ENCODE measurements at regions of chr2 and their contacts with region 1.

Region 1: DNA sequence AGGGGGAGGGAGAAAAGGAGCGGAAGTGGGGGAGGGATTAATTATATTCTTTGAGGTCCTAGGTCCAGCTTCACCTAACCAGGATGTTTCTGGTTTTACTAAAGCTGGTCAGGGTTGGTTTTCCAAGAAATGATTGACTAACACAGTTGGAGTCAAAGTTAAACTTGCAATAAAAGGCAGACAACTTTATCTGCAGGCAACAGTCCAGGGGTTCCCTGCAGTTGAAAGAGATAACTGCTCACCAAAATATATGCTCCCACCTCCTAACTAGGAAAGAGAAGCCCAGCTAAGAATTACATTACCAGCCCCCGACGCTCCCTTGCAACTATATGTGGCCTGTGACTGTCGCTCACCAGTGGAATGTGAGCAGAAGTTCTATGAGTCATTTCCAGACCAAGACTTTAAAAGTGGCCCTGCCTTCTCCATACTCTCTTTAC is 140.0 kb upstream of the PKDCC start:
- DNase-seq: no peak
- H3K4me3 ChIP-seq: no peak overlapping the region
- H3K27ac ChIP-seq: no peak overlapping the region
- H3K27me3 ChIP-seq: peaks cover 2% of the 10 kb centered on the region
- CTCF ChIP-seq: no peak

Region 2: GRCh38 chr2:41926614-41927580 is 19.1 kb after region 1 on chr2:
- CTCF ChIA-PET with region 1: no interaction called
- POLR2A ChIA-PET with region 1: interaction called, 14 read pairs
- DNase-seq: no peak
- H3K4me3 ChIP-seq: no peak overlapping the region
- H3K27ac ChIP-seq: no peak overlapping the region
- H3K27me3 ChIP-seq: no peaks in the 10 kb centered on the region
- CTCF ChIP-seq: no peak

Region 3: DNA sequence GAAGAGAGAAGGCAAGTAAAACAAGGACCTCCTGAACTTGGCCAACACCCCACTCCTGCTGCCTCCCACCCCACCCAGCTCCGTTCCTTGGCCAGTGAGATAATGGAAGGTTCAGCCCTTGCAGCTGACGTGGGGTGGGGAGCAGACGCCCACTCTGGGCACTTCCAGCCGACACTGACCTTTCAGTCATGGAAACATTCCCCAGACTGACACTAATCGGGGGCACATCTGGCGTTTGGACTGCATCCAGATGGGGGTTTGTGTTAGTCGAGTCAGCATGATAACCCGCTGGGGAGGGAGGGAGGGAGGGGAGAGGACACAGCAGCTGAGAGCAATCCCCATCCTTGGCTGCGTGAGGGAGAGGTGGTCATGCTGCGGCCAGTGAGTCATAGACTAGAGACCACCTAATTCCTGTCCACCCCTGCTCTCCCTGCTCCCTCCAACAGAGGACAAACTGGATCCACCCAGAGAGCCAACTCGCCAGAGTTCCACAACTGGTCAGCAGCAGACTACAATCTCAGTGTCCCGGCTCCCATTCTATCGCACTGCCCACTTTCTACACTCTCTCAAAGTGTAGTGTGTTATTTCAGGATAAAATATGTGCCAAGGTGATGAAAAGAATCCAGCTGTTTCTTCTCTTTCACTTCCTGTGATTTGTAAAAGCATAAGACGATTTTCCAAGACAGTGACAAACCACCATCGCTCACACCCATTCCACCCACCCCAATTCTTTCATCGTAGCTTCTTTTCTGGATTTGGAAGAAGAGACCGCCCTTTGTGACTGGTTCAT is 24.6 kb after region 1 on chr2:
- CTCF ChIA-PET with region 1: no interaction called
- POLR2A ChIA-PET with region 1: interaction called, 16 read pairs
- DNase-seq: peak; percentile 93
- H3K4me3 ChIP-seq: peak overlapping the region; percentile 17
- H3K27ac ChIP-seq: peak overlapping the region; percentile 62
- H3K27me3 ChIP-seq: no peaks in the 10 kb centered on the region
- CTCF ChIP-seq: peak; percentile 21; the same call in 1 of the 2 replicates

Region 4: GRCh38 chr2:41937464-41937906 is 29.7 kb after region 1 on chr2:
- CTCF ChIA-PET with region 1: no interaction called
- POLR2A ChIA-PET with region 1: interaction called, 16 read pairs
- DNase-seq: no peak
- H3K4me3 ChIP-seq: no peak overlapping the region
- H3K27ac ChIP-seq: peak overlapping the region; percentile 31
- H3K27me3 ChIP-seq: no peaks in the 10 kb centered on the region
- CTCF ChIP-seq: no peak

Region 5: DNA sequence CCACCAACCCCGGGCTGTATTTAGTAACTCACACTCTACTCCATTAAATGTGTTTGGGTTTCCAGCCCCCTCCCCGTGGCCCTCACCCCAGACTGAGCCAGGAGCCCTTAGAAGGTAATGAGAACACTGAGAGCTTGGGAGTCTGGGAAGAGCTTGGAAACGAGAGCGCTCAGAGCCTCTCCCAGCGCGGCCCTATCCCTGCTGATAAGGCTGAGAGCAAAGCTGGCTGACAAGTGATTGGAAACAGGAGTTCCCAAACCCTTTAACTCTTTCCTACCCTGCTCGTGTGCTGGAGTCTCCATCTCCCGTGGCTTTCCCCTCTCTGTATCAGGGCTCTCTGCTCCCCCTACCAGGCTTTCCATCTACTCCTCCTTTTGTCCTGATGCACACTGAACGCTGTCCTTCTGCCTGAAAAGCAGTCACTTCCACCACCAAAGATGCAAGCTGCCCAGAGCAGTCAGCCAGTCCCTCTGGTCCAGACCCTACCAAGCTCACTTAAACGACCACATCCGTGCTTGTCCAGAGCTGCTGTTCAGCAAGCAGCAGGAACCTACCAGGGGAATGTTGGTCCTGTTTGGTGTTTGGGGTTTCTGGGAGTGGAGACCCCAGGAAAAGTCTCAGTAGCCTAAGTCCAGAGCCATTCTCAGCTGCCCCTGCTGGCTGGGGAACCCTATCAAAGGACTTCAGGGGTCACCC is 40.1 kb after region 1 on chr2:
- CTCF ChIA-PET with region 1: no interaction called
- POLR2A ChIA-PET with region 1: no interaction called
- DNase-seq: no peak
- H3K4me3 ChIP-seq: no peak overlapping the region
- H3K27ac ChIP-seq: no peak overlapping the region
- H3K27me3 ChIP-seq: peaks cover 36% of the 10 kb centered on the region
- CTCF ChIP-seq: no peak

Region 6: DNA sequence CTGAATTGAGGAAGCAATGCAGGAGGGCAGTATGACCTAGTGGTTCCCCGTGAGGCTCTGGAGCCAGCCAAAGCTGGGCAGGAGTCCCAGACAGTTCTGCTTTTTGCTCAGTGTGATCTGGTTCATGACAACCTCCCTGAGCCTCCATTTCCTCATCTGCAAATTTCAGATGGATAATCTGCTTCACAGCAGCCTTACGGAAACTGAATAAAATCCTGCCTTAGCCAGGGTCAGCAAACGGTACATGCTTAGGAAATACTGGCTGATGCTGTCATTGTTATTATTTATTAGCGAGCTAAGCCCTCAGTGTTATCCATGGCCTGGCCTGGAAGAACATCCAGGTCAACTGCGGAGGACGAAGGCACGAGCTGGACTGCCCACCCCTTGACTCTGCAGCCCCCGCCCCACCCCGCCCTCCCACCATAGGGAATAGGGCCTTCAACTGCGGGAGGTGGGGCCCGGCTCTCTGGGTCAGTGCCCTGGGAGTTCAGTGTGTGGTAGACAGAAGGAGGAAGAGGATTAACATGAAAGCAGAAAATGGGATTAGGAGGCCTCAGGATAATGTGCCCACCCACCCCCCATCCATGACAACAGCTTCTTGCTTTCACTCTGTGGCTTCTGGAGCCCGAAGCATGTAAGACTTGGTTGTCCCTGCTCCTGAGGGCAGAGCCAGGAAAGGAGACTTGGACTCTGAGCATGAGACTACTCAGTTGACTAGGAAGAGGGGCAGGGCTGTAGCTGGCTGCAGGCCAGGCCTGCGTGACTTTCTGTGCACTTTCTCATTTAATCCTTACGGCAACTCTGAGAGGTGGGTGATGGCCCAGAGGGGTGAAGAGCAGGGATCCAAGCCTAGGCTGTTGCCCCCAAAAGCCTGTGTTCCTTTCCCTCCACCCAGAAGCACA is 153.2 kb after region 1 on chr2:
- CTCF ChIA-PET with region 1: no interaction called
- POLR2A ChIA-PET with region 1: interaction called, 10 read pairs
- DNase-seq: no peak
- H3K4me3 ChIP-seq: no peak overlapping the region
- H3K27ac ChIP-seq: peak overlapping the region; percentile 21
- H3K27me3 ChIP-seq: no peaks in the 10 kb centered on the region
- CTCF ChIP-seq: no peak